H1 (cell line): ENCODE measurements at regions of chr11 and their contacts with region 1.

Region 1: GRCh38 chr11:120667281-120667680 is 155.7 kb downstream of the GRIK4 start:
- DNase-seq: no peak
- H3K4me3 ChIP-seq: no peak overlapping the region
- H3K27ac ChIP-seq: no peak overlapping the region
- H3K4me1 ChIP-seq: peaks cover 3 to 7% (median 5%) of the 10 kb centered on the region in 4 experiments; a peak in 5 of 7 replicates
- H3K27me3 ChIP-seq: no peaks in the 10 kb centered on the region
- CTCF ChIP-seq: no peak
- EP300 ChIP-seq: no peak
- POLR2A ChIP-seq: no peak
- RAD21 ChIP-seq: no peak

Region 2: GRCh38 chr11:120539667-120540369 is 127.5 kb before region 1 on chr11:
- CTCF ChIA-PET with region 1: no interaction called
- POLR2A ChIA-PET with region 1: no interaction called
- DNase-seq: no peak
- H3K4me3 ChIP-seq: no peak overlapping the region
- H3K27ac ChIP-seq: no peak overlapping the region
- H3K4me1 ChIP-seq: no peaks in the 10 kb centered on the region; a peak in 1 of 7 replicates
- H3K27me3 ChIP-seq: no peaks in the 10 kb centered on the region
- CTCF ChIP-seq: no peak
- EP300 ChIP-seq: no peak
- POLR2A ChIP-seq: no peak
- RAD21 ChIP-seq: no peak

Region 3: DNA sequence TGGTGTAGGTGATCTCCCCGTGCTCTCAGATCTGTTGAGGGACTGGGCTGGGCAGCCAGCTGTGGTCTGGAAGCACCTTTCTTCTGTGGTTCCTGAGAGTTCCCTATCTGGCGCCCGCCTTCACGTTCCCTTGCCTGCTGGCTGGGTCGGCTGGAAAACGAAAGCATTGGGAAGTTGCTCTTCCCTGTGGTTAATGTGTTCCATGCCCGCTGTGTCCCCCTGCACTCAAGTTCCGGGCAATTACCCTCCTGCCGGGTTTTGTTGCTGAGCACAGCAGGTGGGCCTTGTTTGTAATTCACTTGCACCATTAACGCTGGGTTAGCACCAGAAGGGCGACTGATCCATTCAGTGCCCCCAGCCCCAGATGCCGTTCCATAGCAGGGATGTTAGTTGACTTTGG is 21.6 kb before region 1 on chr11:
- CTCF ChIA-PET with region 1: interaction called, 11 read pairs
- POLR2A ChIA-PET with region 1: no interaction called
- DNase-seq: peak; percentile 86 to 90
- H3K4me3 ChIP-seq: peak overlapping the region in 2 of 4 experiments; percentile 1 to 24; a peak in 1 of 8 replicates
- H3K27ac ChIP-seq: no peak overlapping the region
- H3K4me1 ChIP-seq: peaks cover 7 to 20% (median 11%) of the 10 kb centered on the region in 4 experiments
- H3K27me3 ChIP-seq: peaks cover 52 to 92% (median 82%) of the 10 kb centered on the region in 4 experiments
- CTCF ChIP-seq: no peak
- EP300 ChIP-seq: peak in 1 of 2 experiments; percentile 94; a peak in 2 of 3 replicates
- POLR2A ChIP-seq: no peak
- RAD21 ChIP-seq: peak in 1 of 2 experiments; percentile 26; a peak in 2 of 4 replicates

Region 4: GRCh38 chr11:120652705-120653335 is 14.5 kb before region 1 on chr11:
- CTCF ChIA-PET with region 1: interaction called, 16 read pairs
- POLR2A ChIA-PET with region 1: no interaction called
- DNase-seq: no peak
- H3K4me3 ChIP-seq: no peak overlapping the region
- H3K27ac ChIP-seq: no peak overlapping the region
- H3K4me1 ChIP-seq: no peaks in the 10 kb centered on the region; a peak in 1 of 7 replicates
- H3K27me3 ChIP-seq: peaks cover 15 to 37% (median 24%) of the 10 kb centered on the region in 4 experiments
- CTCF ChIP-seq: no peak
- EP300 ChIP-seq: no peak
- POLR2A ChIP-seq: no peak
- RAD21 ChIP-seq: no peak